Psoas muscle (tissue), 8 donors: ENCODE measurements at regions of chr10 and their contacts with region 1.

Region 1: GRCh38 chr10:72223743-72224101 is 7.6 kb upstream of the ASCC1 start:
- DNase-seq: no peak
- ATAC-seq: peak in 3 of 4 donors; percentile 50 to 55 (median 54)
- H3K4me3 ChIP-seq: no peak overlapping the region
- H3K27ac ChIP-seq: peak overlapping the region; percentile 97
- H3K4me1 ChIP-seq: peaks cover 64% of the 10 kb centered on the region
- H3K27me3 ChIP-seq: no peaks in the 10 kb centered on the region
- CTCF ChIP-seq: no peak

Region 2: DNA sequence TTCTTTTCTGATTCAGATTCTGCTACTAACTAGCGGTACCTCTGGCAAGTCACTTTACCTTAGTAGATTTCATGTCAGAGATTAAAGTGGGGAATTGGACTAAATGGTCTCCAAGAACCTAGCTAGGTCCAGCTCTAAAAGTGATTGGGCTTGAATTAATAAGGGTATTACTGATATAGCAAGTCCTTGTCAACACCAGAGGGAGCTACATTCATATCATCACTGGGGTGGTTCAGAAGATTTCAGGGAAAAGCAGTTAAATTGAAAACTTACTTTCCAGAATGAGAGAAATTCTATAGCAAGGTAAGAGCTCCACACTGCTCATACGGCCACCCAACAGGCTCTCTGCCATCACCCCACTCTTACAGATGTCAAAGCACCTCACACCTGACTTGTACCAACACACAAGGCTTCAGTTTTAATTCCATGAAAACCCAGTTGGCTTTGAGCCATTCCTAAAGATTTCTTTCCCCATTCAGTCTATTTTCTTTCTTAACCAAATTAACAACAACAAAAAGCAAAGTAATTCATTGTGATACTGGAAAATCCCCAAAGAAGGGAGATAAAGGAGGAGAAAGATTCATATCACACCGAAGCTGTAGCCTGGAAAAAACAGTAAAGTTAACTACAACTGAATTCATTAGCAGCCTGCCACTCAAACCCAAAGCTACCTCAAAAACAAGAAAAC is 97.4 kb before region 1 on chr10:
- intact Hi-C with region 1: loop called in 1 of 2 experiments (anchors 2 kb)
- DNase-seq: no peak
- ATAC-seq: peak in 1 of 4 donors; percentile 57
- H3K4me3 ChIP-seq: no peak overlapping the region
- H3K27ac ChIP-seq: no peak overlapping the region
- H3K4me1 ChIP-seq: no peaks in the 10 kb centered on the region
- H3K27me3 ChIP-seq: no peaks in the 10 kb centered on the region
- CTCF ChIP-seq: peak; percentile 45